ENCODE measurements at regions of chr1 and their contacts with region 1.

Region 1: GRCh38 chr1:25487628-25488027 is 55.8 kb upstream of the LDLRAP1 start:
- DNase-seq: peak; percentile 54
- ATAC-seq: no peak
- H3K4me3 Mint-ChIP-seq: no peak overlapping the region
- H3K27ac Mint-ChIP-seq: no peak overlapping the region
- H3K4me1 Mint-ChIP-seq: peaks cover 7% of the 10 kb centered on the region
- H3K27me3 Mint-ChIP-seq: no peaks in the 10 kb centered on the region

Region 2: GRCh38 chr1:25425098-25426085 is 62.2 kb before region 1 on chr1:
- CTCF ChIA-PET with region 1: interaction called, 10 read pairs
- POLR2A ChIA-PET with region 1: no interaction called
- intact Hi-C with region 1: no loop called
- DNase-seq: no peak
- ATAC-seq: no peak
- H3K4me3 Mint-ChIP-seq: no peak overlapping the region
- H3K27ac Mint-ChIP-seq: no peak overlapping the region
- H3K4me1 Mint-ChIP-seq: peaks cover 6% of the 10 kb centered on the region
- H3K27me3 Mint-ChIP-seq: no peaks in the 10 kb centered on the region

Region 3: GRCh38 chr1:25476186-25477097 is 11.2 kb before region 1 on chr1:
- CTCF ChIA-PET with region 1: interaction called, 16 read pairs
- POLR2A ChIA-PET with region 1: no interaction called
- intact Hi-C with region 1: no loop called
- DNase-seq: no peak
- ATAC-seq: peak; percentile 39
- H3K4me3 Mint-ChIP-seq: no peak overlapping the region
- H3K27ac Mint-ChIP-seq: peak overlapping the region; percentile 28
- H3K4me1 Mint-ChIP-seq: peaks cover 57% of the 10 kb centered on the region
- H3K27me3 Mint-ChIP-seq: no peaks in the 10 kb centered on the region

Region 4: DNA sequence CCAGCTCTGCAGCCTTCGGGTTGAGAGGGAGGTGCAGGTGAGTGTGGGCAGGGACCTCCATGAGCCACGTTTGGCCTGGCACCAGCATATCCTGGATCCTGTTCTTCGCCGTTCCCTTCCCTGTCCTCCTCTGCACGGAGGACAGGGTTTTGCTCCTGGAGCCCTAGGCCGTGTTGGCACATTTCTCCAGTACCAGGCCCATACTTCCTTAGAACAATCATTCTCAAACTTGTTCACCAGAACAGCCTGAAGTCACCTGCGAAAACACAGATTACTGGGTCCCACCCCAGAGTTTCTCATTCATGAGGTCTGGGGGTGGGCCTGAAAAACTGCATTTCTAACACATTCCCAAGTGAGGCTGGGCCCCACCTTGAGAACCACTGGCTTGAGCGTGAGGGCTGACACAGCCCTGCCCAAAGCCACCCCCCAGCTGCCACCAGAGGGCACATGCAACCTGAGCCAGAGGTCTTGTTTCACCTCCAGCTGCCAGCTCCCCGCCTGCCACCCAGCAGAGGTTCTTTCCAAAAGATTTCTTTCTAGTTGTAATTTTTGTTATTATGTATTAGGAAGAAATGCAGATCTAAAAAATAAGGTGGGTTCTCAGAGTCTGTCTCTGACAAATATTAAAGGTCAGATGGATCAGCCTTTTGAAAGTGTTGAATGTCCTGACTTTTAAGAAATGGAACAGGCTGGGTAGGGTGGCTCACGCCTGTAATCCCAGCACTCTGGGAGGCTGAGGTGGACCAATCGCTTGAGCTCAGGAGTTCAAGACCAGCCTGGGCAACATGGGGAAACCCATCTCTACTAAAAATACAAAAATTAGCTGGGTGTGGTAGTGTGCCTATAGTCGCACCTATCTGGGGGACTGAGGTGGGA is 16.2 kb after region 1 on chr1:
- CTCF ChIA-PET with region 1: interaction called, 22 read pairs
- POLR2A ChIA-PET with region 1: interaction called, 4 read pairs
- intact Hi-C with region 1: no loop called
- DNase-seq: peak; percentile 84
- ATAC-seq: peak; percentile 92
- H3K4me3 Mint-ChIP-seq: no peak overlapping the region
- H3K27ac Mint-ChIP-seq: no peak overlapping the region
- H3K4me1 Mint-ChIP-seq: peaks cover 33% of the 10 kb centered on the region
- H3K27me3 Mint-ChIP-seq: no peaks in the 10 kb centered on the region